Panc1 (cell line): ENCODE measurements at regions of chr1 and their contacts with region 1.

Region 1: GRCh38 chr1:96557336-96557735 is 164.2 kb upstream of the PTBP2 start:
- DNase-seq: no peak
- ATAC-seq: no peak
- H3K4me3 ChIP-seq: no peak overlapping the region
- H3K27ac ChIP-seq: no peak overlapping the region
- H3K4me1 ChIP-seq: no peaks in the 10 kb centered on the region
- H3K27me3 ChIP-seq: no peaks in the 10 kb centered on the region
- CTCF ChIP-seq: no peak

Region 2: DNA sequence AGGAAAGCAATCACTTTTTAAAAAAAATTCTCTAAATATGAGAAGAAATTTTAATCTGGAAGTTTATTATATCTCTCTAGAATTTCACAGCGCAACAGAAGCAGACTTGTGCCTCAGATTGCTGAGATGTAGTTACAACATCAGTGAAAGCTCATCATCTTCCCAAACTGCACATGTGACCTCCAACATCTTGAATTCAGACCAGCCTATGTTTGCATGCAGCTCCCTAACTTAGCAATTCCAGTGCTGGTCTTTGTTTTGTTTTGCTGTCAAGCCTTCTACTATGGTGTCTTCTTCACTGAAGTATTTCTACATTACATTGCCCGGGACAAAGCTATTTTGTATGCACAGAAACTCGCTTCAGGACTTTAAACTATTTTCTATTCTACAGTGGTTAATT is 520.6 kb before region 1 on chr1:
- CTCF ChIA-PET with region 1: no interaction called
- POLR2A ChIA-PET with region 1: no interaction called
- in situ Hi-C with region 1: no loop called
- intact Hi-C with region 1: no loop called
- DNase-seq: no peak
- ATAC-seq: no peak
- H3K4me3 ChIP-seq: no peak overlapping the region
- H3K27ac ChIP-seq: no peak overlapping the region
- H3K4me1 ChIP-seq: no peaks in the 10 kb centered on the region
- H3K27me3 ChIP-seq: no peaks in the 10 kb centered on the region
- CTCF ChIP-seq: no peak

Region 3: DNA sequence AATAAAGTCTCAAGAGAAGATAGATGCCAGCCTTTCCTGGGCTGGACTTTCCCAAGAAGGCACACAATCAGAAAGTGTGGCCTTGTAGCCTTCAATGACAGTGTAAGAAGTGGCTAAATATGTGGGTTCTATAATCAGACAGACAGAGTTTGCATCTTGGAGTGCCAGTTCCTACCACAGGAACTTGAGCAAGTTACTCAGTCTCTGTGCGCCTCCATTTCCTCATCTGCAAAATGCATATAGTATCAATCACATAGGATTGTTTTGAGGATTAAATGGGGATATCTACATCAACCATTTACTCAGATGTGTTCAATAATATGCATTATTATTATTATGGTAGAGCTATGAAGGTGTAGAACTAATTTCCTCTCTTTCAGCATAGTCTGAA is 12.5 kb before region 1 on chr1:
- CTCF ChIA-PET with region 1: no interaction called
- POLR2A ChIA-PET with region 1: interaction called, 11 read pairs
- in situ Hi-C with region 1: no loop called
- intact Hi-C with region 1: no loop called
- DNase-seq: no peak
- ATAC-seq: no peak
- H3K4me3 ChIP-seq: no peak overlapping the region
- H3K27ac ChIP-seq: no peak overlapping the region
- H3K4me1 ChIP-seq: no peaks in the 10 kb centered on the region
- H3K27me3 ChIP-seq: no peaks in the 10 kb centered on the region
- CTCF ChIP-seq: no peak

Region 4: DNA sequence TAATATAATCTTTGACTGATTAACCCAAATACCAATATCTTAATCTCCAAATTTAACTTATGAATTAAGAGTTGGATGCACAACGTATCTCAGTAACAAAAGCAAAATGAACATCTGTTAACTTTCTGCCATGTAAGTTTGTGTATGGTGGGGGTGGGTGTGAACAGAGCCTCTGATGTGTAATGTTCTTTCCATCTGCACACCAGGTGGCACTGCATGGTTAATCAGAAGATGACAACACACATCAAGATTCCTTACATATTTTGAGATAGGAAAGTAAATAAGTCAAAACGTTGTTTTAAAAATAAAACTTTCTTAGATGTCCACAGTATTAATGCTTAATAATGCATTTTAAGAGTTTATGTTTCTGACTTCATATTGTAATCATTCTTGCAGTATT is 1111.6 kb after region 1 on chr1:
- CTCF ChIA-PET with region 1: no interaction called
- POLR2A ChIA-PET with region 1: no interaction called
- in situ Hi-C with region 1: no loop called
- intact Hi-C with region 1: no loop called
- DNase-seq: peak; percentile 7
- ATAC-seq: no peak
- H3K4me3 ChIP-seq: no peak overlapping the region
- H3K27ac ChIP-seq: no peak overlapping the region
- H3K4me1 ChIP-seq: no peaks in the 10 kb centered on the region
- H3K27me3 ChIP-seq: no peaks in the 10 kb centered on the region
- CTCF ChIP-seq: peak; percentile 16; the same call in 1 of the 2 replicates